GM18951 (cell line): ENCODE measurements at regions of chr2 and their contacts with region 1.

Region 1: DNA sequence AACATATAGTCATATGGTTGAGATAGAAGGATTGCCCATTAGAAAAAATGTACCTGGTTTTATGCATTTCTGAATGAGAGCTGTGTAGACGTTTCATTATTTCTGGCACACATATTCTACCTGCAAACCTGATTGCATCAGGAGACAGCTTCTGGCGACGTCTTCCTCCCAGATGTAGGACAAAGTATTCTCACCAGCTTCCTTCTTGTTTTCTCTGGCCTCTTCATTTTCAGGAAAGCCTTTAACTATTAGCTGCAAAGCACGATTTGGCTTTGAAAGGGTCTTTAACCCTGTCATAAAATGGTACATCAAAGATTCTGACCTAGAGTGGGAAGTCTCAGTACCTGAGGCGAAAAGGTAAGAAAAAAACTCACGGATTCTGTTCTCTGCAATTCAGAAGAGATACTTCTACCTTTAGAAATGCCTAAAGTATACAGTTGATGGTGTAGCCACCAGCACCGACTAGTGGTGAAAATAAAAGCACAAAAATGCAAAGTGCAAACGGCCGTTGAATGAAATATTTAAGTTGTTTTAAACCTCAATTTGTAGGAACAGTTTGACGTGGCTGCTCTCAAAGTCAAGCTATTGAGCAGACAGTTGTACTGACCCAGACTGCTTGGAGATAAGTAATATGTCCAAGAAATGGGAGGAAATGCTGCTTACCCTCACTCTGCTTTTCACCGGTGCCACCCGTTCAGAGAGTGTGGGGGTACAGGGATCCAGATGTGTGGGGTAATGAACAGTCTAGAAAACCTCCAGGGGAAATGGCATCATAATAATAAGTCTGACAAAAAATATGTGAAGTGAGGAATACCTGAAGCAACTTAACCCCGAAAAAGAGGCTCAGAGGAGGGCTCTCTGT is 20.2 kb downstream of the IL18RAP start:
- POLR2A ChIP-seq: no peak

Region 2: DNA sequence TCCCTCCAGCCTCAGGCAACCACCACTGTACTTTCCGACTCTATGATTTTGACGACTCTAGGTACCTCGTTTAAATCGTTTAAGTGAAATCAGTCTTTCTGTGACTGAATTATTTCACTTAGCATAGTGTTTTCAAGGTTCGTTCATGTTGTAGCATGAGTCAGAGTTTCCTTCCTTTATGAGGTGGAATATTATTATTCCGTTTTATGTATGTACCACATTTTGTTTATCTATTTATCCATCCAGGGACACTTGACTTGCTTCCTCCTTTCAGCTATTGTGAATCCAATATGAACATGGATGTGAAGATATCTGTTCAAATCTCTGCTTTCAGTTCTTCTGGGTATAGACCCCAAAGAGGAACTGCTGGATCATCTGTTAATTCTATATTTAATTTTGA is 432.3 kb before region 1 on chr2:
- in situ Hi-C with region 1: loop called (anchors 10 kb)
- POLR2A ChIP-seq: no peak

Region 3: GRCh38 chr2:102240640-102241370 is 202.4 kb before region 1 on chr2:
- in situ Hi-C with region 1: loop called (anchors 5 kb)
- POLR2A ChIP-seq: no peak